Activated CD8-positive, alpha-beta memory T cell treated with anti-CD3 and anti-CD28 coated beads, Interleukin-2, amount 10 ng/mL, durations not matched to agents 7 days and 5 days (primary cell): ENCODE measurements at regions of chr12 and their contacts with region 1.

Region 1: DNA sequence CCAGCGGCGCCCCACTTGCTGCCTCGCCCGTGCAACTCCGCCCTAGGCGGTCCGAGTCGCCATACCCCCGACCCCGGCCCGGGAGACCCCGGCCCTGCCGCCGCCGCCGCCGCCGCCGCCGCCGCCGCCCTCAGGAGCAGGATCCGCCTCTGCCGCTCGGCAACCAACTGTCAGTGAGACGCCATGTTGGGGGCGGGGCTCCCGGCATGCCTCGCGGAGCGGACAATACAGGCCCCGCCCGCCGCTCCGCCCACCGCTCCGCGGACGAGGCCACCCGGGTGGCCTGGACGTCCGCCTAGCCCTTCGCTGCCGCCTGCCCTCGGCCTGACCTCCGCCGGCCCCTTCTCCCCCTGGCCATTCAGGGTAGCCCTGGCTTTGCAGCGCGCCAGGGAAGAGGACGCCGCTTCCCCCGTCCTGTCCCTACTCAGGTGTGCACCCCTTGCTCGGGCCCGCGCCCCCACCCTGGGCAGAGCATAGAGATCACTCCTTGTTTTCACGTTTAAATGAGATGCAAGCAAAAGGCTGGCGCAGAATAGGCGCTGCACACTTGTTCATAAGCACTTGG is at the start of gene HECTD4:
- DNase-seq: peak; percentile 96
- ATAC-seq: peak; percentile 98
- H3K4me3 Mint-ChIP-seq: peak within 1 kb of the TSS; percentile 81
- H3K27ac Mint-ChIP-seq: peak within 1 kb of the TSS; percentile 84
- H3K4me1 Mint-ChIP-seq: peaks cover 29% of the 10 kb centered on the region
- H3K27me3 Mint-ChIP-seq: peaks cover under 1% of the 10 kb centered on the region
- total RNA-seq, gene HECTD4: 49.3 to 55.4 TPM

Region 2: GRCh38 chr12:111943929-111944328 is 438.4 kb before region 1 on chr12:
- CTCF ChIA-PET with region 1: interaction called, 11 read pairs
- DNase-seq: no peak
- ATAC-seq: no peak
- H3K4me3 Mint-ChIP-seq: no peak overlapping the region
- H3K27ac Mint-ChIP-seq: no peak overlapping the region
- H3K4me1 Mint-ChIP-seq: peaks cover 19% of the 10 kb centered on the region
- H3K27me3 Mint-ChIP-seq: no peaks in the 10 kb centered on the region

Region 3: GRCh38 chr12:112198120-112198733 is 184.1 kb before region 1 on chr12:
- CTCF ChIA-PET with region 1: interaction called, 102 read pairs
- DNase-seq: peak; percentile 73
- ATAC-seq: peak; percentile 93
- H3K4me3 Mint-ChIP-seq: no peak overlapping the region
- H3K27ac Mint-ChIP-seq: no peak overlapping the region
- H3K4me1 Mint-ChIP-seq: no peaks in the 10 kb centered on the region
- H3K27me3 Mint-ChIP-seq: no peaks in the 10 kb centered on the region